Activated naive CD4-positive, alpha-beta T cell treated with anti-CD3 and anti-CD28 coated beads for 36 hours (primary cell): ENCODE measurements at regions of chr15 and their contacts with region 1.

Region 1: DNA sequence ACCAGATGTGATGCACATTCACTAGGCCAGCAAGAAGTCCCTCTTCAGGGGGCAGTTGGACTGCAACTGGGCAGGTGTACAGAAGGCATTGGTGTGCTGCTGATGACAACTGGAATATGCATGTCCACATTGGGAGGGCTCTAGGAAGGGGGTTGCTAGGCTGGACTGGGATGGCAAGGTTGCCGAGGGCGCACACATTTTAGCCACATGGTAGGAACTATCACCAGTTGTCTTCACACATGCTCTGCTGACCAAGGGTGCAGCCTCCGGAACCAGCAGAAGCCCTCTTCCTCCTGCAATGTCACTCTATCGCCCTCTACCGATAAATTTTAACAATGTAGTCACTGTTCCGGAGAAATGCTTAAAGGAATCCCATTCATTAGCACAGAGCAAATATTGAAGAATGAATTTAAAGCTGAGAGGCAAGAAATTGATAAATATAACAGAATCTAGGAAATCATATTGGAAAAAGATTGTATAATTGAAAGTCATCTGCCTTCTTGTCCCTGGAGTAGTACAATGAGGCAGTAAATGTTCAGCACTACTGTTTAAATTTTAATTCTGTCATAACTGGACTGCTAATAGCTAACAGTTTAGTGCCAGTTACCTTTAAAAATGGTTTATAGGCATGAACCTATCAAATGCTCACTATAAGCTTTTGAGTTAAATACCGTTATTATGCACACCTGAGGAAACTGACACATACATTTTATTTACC is 22.6 kb upstream of the LYSMD4 start:
- DNase-seq: peak; percentile 35
- H3K4me3 Mint-ChIP-seq: no peak overlapping the region
- H3K27ac Mint-ChIP-seq: no peak overlapping the region
- H3K4me1 Mint-ChIP-seq: peaks cover 5% of the 10 kb centered on the region
- H3K27me3 Mint-ChIP-seq: no peaks in the 10 kb centered on the region

Region 2: GRCh38 chr15:99275525-99276128 is 480.2 kb before region 1 on chr15:
- CTCF ChIA-PET with region 1: interaction called, 77 read pairs
- intact Hi-C with region 1: loop called (anchors 1 kb)
- DNase-seq: no peak
- H3K4me3 Mint-ChIP-seq: no peak overlapping the region
- H3K27ac Mint-ChIP-seq: no peak overlapping the region
- H3K4me1 Mint-ChIP-seq: peaks cover 27% of the 10 kb centered on the region
- H3K27me3 Mint-ChIP-seq: no peaks in the 10 kb centered on the region

Region 3: GRCh38 chr15:99282121-99282520 is 473.7 kb before region 1 on chr15:
- CTCF ChIA-PET with region 1: interaction called, 8 read pairs
- intact Hi-C with region 1: loop called (anchors 1 kb)
- DNase-seq: no peak
- H3K4me3 Mint-ChIP-seq: no peak overlapping the region
- H3K27ac Mint-ChIP-seq: no peak overlapping the region
- H3K4me1 Mint-ChIP-seq: peaks cover 43% of the 10 kb centered on the region
- H3K27me3 Mint-ChIP-seq: no peaks in the 10 kb centered on the region

Region 4: DNA sequence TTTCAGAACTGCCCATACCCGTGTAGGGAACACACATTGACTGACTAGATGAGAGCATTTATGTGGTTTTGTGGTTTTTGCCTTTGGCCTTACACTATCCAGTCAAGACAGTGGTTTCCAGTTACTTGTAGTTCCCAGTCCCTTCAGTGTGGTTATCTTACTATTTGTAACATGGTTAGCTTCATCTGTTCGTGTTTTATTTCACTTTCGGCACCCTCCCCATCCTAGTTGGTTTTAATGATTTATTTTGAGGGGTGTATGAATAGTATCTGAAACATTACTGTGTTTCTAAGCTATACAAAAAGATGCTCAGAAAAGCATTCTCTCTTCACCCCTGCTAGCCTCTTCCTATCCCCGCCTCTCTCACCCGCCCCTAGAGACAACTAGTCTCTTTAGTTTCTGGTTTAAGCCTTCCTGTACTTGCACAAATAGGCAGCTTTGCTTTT is 36.7 kb before region 1 on chr15:
- CTCF ChIA-PET with region 1: interaction called, 10 read pairs
- intact Hi-C with region 1: no loop called
- DNase-seq: no peak
- H3K4me3 Mint-ChIP-seq: no peak overlapping the region
- H3K27ac Mint-ChIP-seq: no peak overlapping the region
- H3K4me1 Mint-ChIP-seq: peaks cover 40% of the 10 kb centered on the region
- H3K27me3 Mint-ChIP-seq: no peaks in the 10 kb centered on the region